Motor neuron (in vitro differentiated cells): ENCODE measurements at regions of chr7 and their contacts with region 1.

Region 1: GRCh38 chr7:130277763-130278643 is 11.3 kb downstream of the CPA2 start:
- ATAC-seq: peak in 7 of 8 experiments; percentile 3 to 68 (median 59)
- H3K4me3 ChIP-seq: no peak overlapping the region
- H3K27ac ChIP-seq: peak overlapping the region in 1 of 2 donors; percentile 51
- H3K4me1 ChIP-seq: peaks cover 36 to 49% of the 10 kb centered on the region in 2 donors

Region 2: GRCh38 chr7:130486114-130486958 is 208.3 kb after region 1 on chr7:
- in situ Hi-C with region 1: loop called in 1 of 9 experiments (anchors 25 kb)
- ATAC-seq: peak in 1 of 8 experiments; percentile 8
- H3K4me3 ChIP-seq: peak overlapping the region in 1 of 5 donors; percentile 4
- H3K27ac ChIP-seq: peak overlapping the region in 1 of 2 donors; percentile 18
- H3K4me1 ChIP-seq: peaks cover 8 to 28% of the 10 kb centered on the region in 2 donors